Mammary epithelial cell (primary cell): ENCODE measurements at regions of chr10 and their contacts with region 1.

Region 1: DNA sequence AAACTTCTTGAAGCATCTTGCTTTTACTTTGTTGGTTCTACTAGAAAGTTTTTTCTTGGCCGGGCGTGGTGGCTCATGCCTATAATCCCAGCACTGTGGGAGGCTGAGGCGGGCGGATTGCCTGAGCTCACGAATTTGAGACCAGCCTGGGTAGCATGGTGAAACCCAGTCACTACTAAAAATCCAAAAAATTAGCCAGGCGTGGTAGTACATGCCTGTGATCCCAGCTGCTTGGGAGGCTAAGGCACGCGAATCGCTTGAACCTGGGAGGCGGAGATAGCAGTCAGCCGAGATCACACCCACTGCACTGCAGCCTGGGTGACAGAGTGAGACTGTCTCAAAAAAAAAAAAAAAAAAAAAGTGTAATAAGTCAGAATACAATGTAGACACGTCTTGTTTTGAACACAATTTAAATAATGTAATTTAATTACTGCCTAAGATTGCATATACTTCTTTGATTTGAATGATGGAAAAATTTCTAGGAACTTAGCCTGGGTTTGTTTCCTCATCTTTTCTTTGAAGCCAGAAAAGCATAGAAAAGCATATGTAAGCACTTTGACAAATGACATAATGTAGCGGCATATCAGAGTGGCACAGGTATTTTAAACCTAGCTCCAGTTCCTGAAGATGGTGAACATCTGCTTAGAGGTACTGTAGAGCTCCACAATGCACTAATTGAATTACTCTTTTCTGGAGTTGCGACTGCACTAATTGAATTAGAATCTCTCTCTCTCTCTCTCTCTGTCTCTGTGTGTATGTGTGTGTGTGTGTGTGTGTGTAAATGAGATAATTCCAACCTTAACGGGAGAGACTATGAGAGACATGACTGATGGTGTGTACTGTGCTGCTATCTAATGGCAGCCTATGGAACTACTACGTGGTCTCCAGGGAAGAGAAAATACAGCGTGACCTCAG is 87.8 kb downstream of the BTRC start:
- DNase-seq: peak; percentile 67
- H3K4me3 ChIP-seq: no peak overlapping the region
- H3K27ac ChIP-seq: no peak overlapping the region
- H3K4me1 ChIP-seq: no peaks in the 10 kb centered on the region
- H3K27me3 ChIP-seq: no peaks in the 10 kb centered on the region
- CTCF ChIP-seq: peak; percentile 76 to 86

Region 2: GRCh38 chr10:101080933-101081931 is 360.6 kb before region 1 on chr10:
- CTCF ChIA-PET with region 1: no interaction called
- dilution Hi-C with region 1: no loop called
- in situ Hi-C with region 1: no loop called
- intact Hi-C with region 1: no loop called
- DNase-seq: no peak
- H3K4me3 ChIP-seq: no peak overlapping the region
- H3K27ac ChIP-seq: no peak overlapping the region
- H3K4me1 ChIP-seq: peaks cover 7% of the 10 kb centered on the region
- H3K27me3 ChIP-seq: no peaks in the 10 kb centered on the region
- CTCF ChIP-seq: no peak

Region 3: GRCh38 chr10:101161494-101162299 is 280.1 kb before region 1 on chr10:
- CTCF ChIA-PET with region 1: no interaction called
- dilution Hi-C with region 1: no loop called
- in situ Hi-C with region 1: no loop called
- intact Hi-C with region 1: loop called (anchors 5 kb)
- DNase-seq: peak; percentile 71
- H3K4me3 ChIP-seq: peak overlapping the region in 2 of 3 experiments; percentile 16 to 29
- H3K27ac ChIP-seq: no peak overlapping the region
- H3K4me1 ChIP-seq: peaks cover 9% of the 10 kb centered on the region
- H3K27me3 ChIP-seq: no peaks in the 10 kb centered on the region
- CTCF ChIP-seq: peak; percentile 96 to 98

Region 4: GRCh38 chr10:101272229-101272868 is 169.4 kb before region 1 on chr10:
- CTCF ChIA-PET with region 1: no interaction called
- dilution Hi-C with region 1: no loop called
- in situ Hi-C with region 1: no loop called
- intact Hi-C with region 1: loop called (anchors 1 kb)
- DNase-seq: peak; percentile 50
- H3K4me3 ChIP-seq: no peak overlapping the region
- H3K27ac ChIP-seq: no peak overlapping the region
- H3K4me1 ChIP-seq: peaks cover 2% of the 10 kb centered on the region
- H3K27me3 ChIP-seq: no peaks in the 10 kb centered on the region
- CTCF ChIP-seq: peak; percentile 76 to 89

Region 5: DNA sequence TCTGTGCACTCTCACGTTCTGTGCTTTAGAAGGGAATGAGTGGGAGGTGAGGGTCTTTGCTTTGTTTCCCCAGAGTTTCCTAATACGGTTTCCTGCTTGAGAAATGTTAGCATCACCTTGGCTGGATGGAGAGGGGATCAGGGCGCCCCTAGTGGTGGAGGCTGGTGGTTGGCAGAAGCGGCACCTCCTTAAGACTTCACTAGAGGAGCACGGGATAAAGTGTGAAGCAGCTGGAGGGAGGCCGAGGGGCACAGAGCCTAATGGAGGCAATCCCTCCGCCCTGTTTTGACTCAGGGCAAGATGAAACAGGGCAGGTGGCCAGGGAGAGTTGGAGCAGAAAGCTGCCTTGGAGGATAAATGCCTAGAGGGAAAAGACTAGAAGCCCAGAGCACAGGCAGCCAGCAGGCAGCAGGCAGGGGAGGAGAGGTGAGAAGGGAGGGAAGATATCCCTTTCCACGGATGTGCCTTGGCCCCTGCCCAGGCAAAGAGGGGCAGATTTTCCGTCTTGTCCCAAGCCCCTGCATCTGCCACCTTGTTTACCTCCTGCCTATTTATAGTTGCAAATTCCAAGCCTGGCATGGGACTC is 143.8 kb before region 1 on chr10:
- CTCF ChIA-PET with region 1: interaction called, 10 read pairs
- dilution Hi-C with region 1: no loop called
- in situ Hi-C with region 1: loop called in 1 of 2 experiments (anchors 5 kb)
- intact Hi-C with region 1: loop called (anchors 1 kb)
- DNase-seq: peak; percentile 37
- H3K4me3 ChIP-seq: no peak overlapping the region
- H3K27ac ChIP-seq: no peak overlapping the region
- H3K4me1 ChIP-seq: no peaks in the 10 kb centered on the region
- H3K27me3 ChIP-seq: no peaks in the 10 kb centered on the region
- CTCF ChIP-seq: peak; percentile 88 to 91

Region 6: DNA sequence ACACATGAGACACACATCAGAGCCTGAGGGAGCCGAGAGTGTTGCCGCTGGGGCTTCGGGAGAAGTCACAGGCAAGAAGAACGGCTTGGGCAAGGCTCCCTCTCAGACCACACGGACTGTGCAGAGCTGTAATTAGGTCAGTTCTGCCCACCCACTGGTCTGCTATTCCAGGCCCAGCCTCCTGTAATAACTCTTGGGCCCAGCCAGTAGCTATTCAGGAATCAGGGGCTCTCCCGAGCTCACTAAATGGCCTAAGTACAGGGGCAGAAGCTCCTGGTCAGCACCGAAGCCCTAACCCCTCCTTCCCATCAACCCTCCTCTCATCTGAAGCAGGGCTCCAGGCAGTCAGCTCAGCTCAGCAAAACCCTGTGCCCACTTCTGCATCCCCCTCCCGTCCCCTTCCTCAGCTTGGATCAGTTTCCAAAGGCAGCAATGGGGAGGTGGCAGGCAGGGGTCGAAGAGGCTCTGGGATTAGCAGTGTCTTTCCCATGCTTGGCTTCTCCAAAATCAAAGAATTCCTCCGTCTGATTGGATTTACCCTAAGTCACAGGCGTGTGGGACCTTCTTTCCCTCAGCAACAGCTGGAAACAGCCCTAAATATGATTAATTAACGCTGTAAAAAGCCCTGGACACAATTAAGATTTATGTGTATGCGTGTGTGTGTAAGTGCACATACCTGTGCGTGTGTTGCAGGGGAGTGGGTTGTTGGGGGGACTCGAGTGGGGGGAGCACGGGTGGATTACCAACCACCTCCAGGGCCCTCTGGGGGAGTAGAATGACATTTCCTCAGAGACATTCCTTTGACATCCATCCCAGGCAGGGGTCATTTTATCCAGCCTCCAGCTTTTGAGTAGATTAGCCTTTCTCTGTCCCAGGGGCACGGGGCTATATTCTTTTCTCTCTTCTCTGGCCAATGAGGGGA is 136.2 kb before region 1 on chr10:
- CTCF ChIA-PET with region 1: interaction called, 10 read pairs
- dilution Hi-C with region 1: no loop called
- in situ Hi-C with region 1: loop called (anchors 5 kb)
- intact Hi-C with region 1: loop called (anchors 1 kb)
- DNase-seq: no peak
- H3K4me3 ChIP-seq: no peak overlapping the region
- H3K27ac ChIP-seq: no peak overlapping the region
- H3K4me1 ChIP-seq: peaks cover 16% of the 10 kb centered on the region
- H3K27me3 ChIP-seq: no peaks in the 10 kb centered on the region
- CTCF ChIP-seq: no peak

Region 7: DNA sequence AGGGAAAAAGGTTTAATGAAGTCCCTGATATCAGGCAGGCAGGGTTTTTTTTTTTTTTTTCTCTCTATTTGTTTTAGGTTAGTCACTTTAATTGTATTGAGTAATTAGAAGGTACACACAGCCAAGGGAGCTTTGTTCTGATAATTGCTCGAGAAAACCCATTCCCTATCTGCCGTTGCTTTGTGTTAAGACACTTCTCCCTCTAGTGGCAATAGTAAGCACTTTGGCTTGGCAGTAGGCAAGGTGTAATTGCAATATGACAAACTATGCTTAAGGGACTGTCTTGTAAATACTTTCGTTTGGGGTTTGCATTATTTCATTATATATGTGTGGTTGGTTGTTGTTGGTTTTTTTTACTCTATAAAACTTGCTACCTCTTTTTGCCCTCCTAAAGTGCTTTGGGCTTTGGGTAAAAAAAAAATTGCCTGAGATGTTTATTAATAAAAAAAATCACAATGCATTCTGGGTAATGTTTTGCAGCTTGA is 25.5 kb after region 1 on chr10:
- CTCF ChIA-PET with region 1: no interaction called
- dilution Hi-C with region 1: no loop called
- in situ Hi-C with region 1: no loop called
- intact Hi-C with region 1: loop called (anchors 2 kb)
- DNase-seq: peak; percentile 73
- H3K4me3 ChIP-seq: peak overlapping the region in 1 of 3 experiments; percentile 11
- H3K27ac ChIP-seq: no peak overlapping the region
- H3K4me1 ChIP-seq: no peaks in the 10 kb centered on the region
- H3K27me3 ChIP-seq: no peaks in the 10 kb centered on the region
- CTCF ChIP-seq: peak; percentile 90 to 98